Activated B cell treated with CpG ODN at 0.5 μM for 24 hours (primary cell): ENCODE measurements at regions of chr17 and their contacts with region 1.

Region 1: DNA sequence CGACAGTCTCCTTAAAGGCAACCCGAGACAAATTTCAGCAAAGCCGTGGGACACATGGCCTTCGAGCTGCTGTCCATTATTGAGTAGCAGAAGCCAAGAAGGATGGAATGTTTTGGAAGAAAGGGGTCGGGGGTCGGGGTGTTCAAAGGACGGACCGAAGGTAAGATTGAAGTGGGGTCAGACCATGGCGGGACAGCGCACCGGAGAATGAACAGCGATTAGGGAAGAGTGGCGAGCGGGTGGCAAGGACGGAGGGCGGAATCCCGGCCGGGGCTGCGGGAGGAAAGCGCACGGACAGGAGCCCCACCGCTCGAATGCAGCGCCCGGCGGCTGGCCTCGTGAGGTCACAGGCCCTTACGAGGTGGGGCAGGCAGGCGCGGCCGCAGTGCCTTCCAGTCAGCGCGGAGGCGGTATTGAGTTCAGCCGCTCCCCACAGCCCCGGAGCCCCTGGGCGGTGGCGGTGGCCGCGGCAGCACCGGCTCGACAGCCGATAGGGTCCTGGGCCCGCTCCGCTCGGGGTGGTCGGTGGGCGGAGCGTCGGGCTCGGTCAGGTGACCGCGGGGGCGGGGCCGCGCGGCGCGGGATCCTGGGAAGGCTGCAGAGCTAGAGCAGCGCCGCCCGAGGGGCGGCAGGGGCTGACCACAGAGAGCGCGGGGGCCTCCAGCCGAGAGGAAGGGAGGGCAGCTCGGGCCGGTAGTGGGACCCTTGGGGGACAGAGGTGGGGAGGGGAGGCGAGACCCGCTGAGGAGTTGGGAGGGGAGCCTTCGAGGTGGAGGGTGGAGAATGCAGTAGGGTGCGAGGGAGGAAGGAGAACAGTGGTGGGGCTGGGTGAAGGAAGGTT is at the start of gene EFCAB13:
- DNase-seq: peak; percentile 85
- ATAC-seq: peak; percentile 85
- H3K4me3 Mint-ChIP-seq: peak within 1 kb of the TSS; percentile 98
- H3K27ac Mint-ChIP-seq: peak within 1 kb of the TSS; percentile 99
- H3K4me1 Mint-ChIP-seq: peaks cover 24% of the 10 kb centered on the region
- H3K27me3 Mint-ChIP-seq: no peaks in the 10 kb centered on the region
- CTCF ChIP-seq: no peak
- total RNA-seq, gene EFCAB13: 23.6 and 25.4 TPM in 2 replicates

Region 2: GRCh38 chr17:47066841-47067682 is 256.5 kb before region 1 on chr17:
- CTCF ChIA-PET with region 1: no interaction called
- POLR2A ChIA-PET with region 1: no interaction called
- intact Hi-C with region 1: loop called (anchors 10 kb)
- DNase-seq: peak; percentile 61
- ATAC-seq: peak; percentile 99
- H3K4me3 Mint-ChIP-seq: peak overlapping the region; percentile 96
- H3K27ac Mint-ChIP-seq: peak overlapping the region; percentile 95
- H3K4me1 Mint-ChIP-seq: peaks cover 35% of the 10 kb centered on the region
- H3K27me3 Mint-ChIP-seq: no peaks in the 10 kb centered on the region
- CTCF ChIP-seq: no peak

Region 3: GRCh38 chr17:47205419-47205963 is 118.1 kb before region 1 on chr17:
- CTCF ChIA-PET with region 1: no interaction called
- POLR2A ChIA-PET with region 1: interaction called, 14 read pairs
- intact Hi-C with region 1: loop called (anchors 1 kb)
- DNase-seq: peak; percentile 45
- ATAC-seq: peak; percentile 78
- H3K4me3 Mint-ChIP-seq: peak overlapping the region; percentile 80
- H3K27ac Mint-ChIP-seq: peak overlapping the region; percentile 98
- H3K4me1 Mint-ChIP-seq: peaks cover 74% of the 10 kb centered on the region
- H3K27me3 Mint-ChIP-seq: no peaks in the 10 kb centered on the region
- CTCF ChIP-seq: no peak

Region 4: GRCh38 chr17:47253541-47254402 is 69.8 kb before region 1 on chr17 and contains the start of gene ITGB3:
- CTCF ChIA-PET with region 1: no interaction called
- POLR2A ChIA-PET with region 1: interaction called, 12 read pairs
- intact Hi-C with region 1: loop called (anchors 2 kb)
- DNase-seq: peak; percentile 78
- ATAC-seq: peak; percentile 97
- H3K4me3 Mint-ChIP-seq: peak within 1 kb of the TSS; percentile 91
- H3K27ac Mint-ChIP-seq: peak within 1 kb of the TSS; percentile 74
- H3K4me1 Mint-ChIP-seq: peaks cover 17% of the 10 kb centered on the region
- H3K27me3 Mint-ChIP-seq: no peaks in the 10 kb centered on the region
- CTCF ChIP-seq: no peak
- total RNA-seq, gene ITGB3: 4.1 and 4.7 TPM in 2 replicates

Region 5: GRCh38 chr17:47286198-47286914 is 37.2 kb before region 1 on chr17:
- CTCF ChIA-PET with region 1: no interaction called
- POLR2A ChIA-PET with region 1: interaction called, 16 read pairs
- intact Hi-C with region 1: loop called (anchors 1 kb)
- DNase-seq: peak; percentile 50
- ATAC-seq: peak; percentile 84
- H3K4me3 Mint-ChIP-seq: peak overlapping the region; percentile 57
- H3K27ac Mint-ChIP-seq: peak overlapping the region; percentile 92
- H3K4me1 Mint-ChIP-seq: peaks cover 54% of the 10 kb centered on the region
- H3K27me3 Mint-ChIP-seq: no peaks in the 10 kb centered on the region
- CTCF ChIP-seq: no peak

Region 6: DNA sequence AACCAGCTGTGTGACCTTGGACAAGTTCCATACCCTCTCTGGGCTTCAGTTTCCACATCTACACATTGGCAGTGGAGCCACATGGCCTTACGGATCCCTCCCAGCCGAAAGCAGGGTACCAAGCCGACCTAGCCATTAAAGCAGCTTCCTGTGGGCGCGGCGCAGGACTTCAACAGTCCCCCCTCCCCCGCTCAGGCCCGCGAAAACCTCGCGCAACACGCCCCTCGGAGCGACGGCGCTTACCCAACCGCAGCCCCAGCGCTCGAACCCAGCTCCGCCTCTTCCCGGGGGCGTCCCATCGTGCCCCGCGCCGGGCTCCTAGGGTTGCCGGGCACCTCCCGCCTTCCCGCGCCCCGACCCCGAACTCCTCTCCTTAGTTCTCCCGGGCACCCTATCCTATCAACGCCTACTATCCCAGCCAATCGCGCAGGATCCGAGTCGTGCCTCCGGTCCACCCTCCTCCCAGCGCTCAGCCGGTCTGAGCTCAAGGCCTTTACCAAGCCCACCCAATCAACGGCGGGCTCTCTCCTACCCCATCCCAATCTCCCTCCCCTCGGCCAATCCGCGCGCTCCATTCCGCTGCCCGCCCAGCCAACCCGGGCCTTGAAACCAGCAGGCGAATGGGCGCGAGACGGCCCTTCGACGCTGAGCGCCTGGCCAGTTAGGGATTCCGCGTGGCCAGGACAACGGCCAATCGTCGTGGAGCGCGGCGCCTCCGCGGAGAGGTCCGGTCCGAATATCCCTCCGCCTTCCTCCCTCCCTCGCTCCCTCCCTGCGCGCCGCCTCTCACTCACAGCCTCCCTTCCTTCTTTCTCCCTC is 325.8 kb after region 1 on chr17 and contains the start of gene KPNB1:
- CTCF ChIA-PET with region 1: no interaction called
- POLR2A ChIA-PET with region 1: interaction called, 18 read pairs
- intact Hi-C with region 1: loop called (anchors 1 kb)
- DNase-seq: peak; percentile 92
- ATAC-seq: peak; percentile 80
- H3K4me3 Mint-ChIP-seq: peak within 1 kb of the TSS; percentile 99
- H3K27ac Mint-ChIP-seq: peak within 1 kb of the TSS; percentile 99
- H3K4me1 Mint-ChIP-seq: peaks cover 53% of the 10 kb centered on the region
- H3K27me3 Mint-ChIP-seq: no peaks in the 10 kb centered on the region
- CTCF ChIP-seq: no peak
- total RNA-seq, gene KPNB1: 361 and 365 TPM in 2 replicates